Esophagus muscularis mucosa (tissue), 4 donors: ENCODE measurements at regions of chr16 and their contacts with region 1.

Region 1: GRCh38 chr16:3880623-3881498 is at the start of gene CREBBP:
- DNase-seq: peak; percentile 95
- H3K4me3 ChIP-seq: peak within 1 kb of the TSS; percentile 72 to 91 (median 87)
- H3K27ac ChIP-seq: peak within 1 kb of the TSS; percentile 84 to 92 (median 88)
- H3K4me1 ChIP-seq: peaks cover 30 to 40% (median 37%) of the 10 kb centered on the region in 4 donors
- H3K27me3 ChIP-seq: no peaks in the 10 kb centered on the region
- CTCF ChIP-seq: peak in 1 of 3 experiments; percentile 14
- EP300 ChIP-seq: no peak
- POLR2A ChIP-seq: peak; percentile 12
- total RNA-seq, gene CREBBP: 48.2 to 112 (median 74.9) TPM

Region 2: DNA sequence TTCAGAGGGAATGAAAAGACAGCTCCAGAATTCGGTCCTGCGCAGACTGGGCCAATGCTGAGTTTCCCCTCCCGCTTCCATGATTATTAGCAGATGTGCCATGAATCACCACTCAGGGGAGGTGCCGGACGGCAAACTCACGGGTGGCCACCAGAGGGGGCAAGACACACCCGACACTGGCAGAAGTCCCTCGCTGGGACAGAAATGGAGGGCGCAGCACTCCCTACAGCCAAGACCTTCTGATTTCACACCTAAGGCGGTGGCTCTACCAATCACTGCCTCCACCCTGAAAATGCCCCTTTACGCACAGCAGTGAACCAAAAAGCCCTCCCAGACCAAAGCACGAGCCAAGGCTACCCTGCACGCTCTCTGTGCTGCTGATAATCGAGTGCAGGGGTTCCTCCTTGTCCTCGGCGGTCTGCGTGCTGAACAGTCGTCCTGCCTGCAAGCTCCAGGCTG is 190.4 kb before region 1 on chr16:
- intact Hi-C with region 1: loop called (anchors 2 kb)
- DNase-seq: peak; percentile 98
- H3K4me3 ChIP-seq: peak overlapping the region; percentile 37 to 56 (median 42)
- H3K27ac ChIP-seq: peak overlapping the region; percentile 54 to 75 (median 66)
- H3K4me1 ChIP-seq: peaks cover 6 to 20% (median 18%) of the 10 kb centered on the region in 4 donors
- H3K27me3 ChIP-seq: no peaks in the 10 kb centered on the region
- CTCF ChIP-seq: peak; percentile 95 to 96 (median 96)
- EP300 ChIP-seq: no peak
- POLR2A ChIP-seq: no peak

Region 3: DNA sequence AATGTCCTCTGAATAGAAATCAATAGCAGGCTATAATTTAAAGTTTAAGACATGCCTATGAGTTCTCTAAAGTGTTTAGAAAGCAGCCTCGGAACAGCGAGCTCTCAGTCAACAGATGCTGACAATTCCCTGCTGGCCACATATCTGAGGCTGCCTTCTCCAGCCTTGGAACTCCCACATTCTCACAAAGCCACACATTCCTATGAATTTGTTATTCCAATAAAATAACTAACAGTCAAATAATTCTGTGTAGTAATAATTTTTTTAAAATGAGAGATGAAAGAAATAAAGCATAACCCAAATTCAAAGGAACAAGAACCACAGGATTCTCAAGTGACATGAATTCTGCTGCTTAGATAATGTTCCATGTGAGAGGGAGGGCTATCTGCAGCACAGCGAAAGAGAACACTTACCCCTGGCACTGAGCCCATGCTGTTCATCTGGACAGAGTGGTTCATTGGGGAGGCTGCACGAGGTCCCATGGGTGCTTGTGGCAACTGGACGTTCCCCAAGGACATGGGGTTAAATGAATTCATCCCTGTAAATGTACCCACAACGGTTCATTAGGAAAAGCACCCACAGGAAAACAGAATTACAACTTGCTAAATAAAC is 106.6 kb before region 1 on chr16:
- intact Hi-C with region 1: loop called (anchors 5 kb)
- DNase-seq: no peak
- H3K4me3 ChIP-seq: no peak overlapping the region
- H3K27ac ChIP-seq: no peak overlapping the region
- H3K4me1 ChIP-seq: peaks cover 30 to 45% (median 42%) of the 10 kb centered on the region in 4 donors
- H3K27me3 ChIP-seq: no peaks in the 10 kb centered on the region
- CTCF ChIP-seq: no peak
- EP300 ChIP-seq: no peak
- POLR2A ChIP-seq: no peak

Region 4: DNA sequence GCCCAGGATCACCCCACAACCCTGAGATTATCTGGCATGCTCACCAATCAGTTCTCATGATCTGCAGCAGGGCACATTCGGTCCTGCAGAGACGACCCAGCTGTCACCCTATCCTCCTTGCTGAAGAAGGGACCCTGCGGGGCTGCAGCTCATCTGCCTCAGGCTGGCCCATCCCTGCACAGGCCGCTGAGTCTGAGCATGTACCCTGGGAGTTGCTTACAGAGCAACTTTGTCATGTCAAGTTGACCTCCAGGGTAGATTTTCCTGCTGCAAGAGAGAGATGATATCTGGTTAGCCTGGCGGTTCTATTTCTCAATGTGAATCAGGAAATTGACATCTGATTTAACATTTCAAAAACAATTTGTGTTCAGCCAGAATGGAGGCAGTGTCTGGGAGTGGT is 271.4 kb after region 1 on chr16:
- intact Hi-C with region 1: no loop called
- DNase-seq: no peak
- H3K4me3 ChIP-seq: no peak overlapping the region
- H3K27ac ChIP-seq: no peak overlapping the region
- H3K4me1 ChIP-seq: no peaks in the 10 kb centered on the region
- H3K27me3 ChIP-seq: no peaks in the 10 kb centered on the region
- CTCF ChIP-seq: no peak
- EP300 ChIP-seq: no peak
- POLR2A ChIP-seq: no peak